ENCODE measurements at regions of chr11 and their contacts with region 1.

Region 1: DNA sequence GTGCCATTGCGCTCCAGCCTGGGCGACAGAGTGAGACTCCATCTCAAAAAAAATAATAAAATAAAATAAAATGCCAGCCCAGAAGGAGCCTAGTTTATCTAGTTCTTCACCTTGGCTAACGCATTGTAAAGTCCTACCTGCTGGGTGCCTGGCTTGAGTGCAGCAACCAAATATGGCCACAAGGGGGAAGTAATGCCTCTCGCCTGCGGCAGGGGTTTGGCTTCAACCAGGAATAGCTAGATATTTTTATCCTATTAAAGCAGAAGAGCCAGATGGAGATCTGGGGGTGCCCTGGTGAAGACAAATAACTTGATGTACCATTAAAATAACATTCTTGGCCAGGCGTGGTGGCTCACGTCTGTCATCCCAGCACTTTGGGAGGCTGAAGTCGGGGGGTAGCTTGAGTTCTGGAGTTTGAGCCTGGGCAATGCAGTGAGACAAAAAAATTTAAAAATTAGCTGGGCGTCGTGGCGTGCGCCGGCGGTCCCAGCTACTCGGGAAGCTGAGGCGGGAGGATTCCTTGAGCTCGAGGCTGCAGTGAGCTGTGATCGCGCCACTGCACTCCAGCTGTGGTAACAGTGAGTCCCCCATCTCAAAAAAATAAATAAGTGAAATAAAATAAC is 20.6 kb upstream of the PLEKHB1 start:
- DNase-seq: peak; percentile 76
- ATAC-seq: peak; percentile 87
- H3K4me3 Mint-ChIP-seq: no peak overlapping the region
- H3K27ac Mint-ChIP-seq: no peak overlapping the region
- H3K4me1 Mint-ChIP-seq: peaks cover 2% of the 10 kb centered on the region
- H3K27me3 Mint-ChIP-seq: peaks cover 25% of the 10 kb centered on the region

Region 2: GRCh38 chr11:73478738-73479347 is 147.0 kb before region 1 on chr11:
- CTCF ChIA-PET with region 1: interaction called, 11 read pairs
- POLR2A ChIA-PET with region 1: no interaction called
- DNase-seq: no peak
- ATAC-seq: no peak
- H3K4me3 Mint-ChIP-seq: no peak overlapping the region
- H3K27ac Mint-ChIP-seq: no peak overlapping the region
- H3K4me1 Mint-ChIP-seq: no peaks in the 10 kb centered on the region
- H3K27me3 Mint-ChIP-seq: peaks cover 2% of the 10 kb centered on the region

Region 3: DNA sequence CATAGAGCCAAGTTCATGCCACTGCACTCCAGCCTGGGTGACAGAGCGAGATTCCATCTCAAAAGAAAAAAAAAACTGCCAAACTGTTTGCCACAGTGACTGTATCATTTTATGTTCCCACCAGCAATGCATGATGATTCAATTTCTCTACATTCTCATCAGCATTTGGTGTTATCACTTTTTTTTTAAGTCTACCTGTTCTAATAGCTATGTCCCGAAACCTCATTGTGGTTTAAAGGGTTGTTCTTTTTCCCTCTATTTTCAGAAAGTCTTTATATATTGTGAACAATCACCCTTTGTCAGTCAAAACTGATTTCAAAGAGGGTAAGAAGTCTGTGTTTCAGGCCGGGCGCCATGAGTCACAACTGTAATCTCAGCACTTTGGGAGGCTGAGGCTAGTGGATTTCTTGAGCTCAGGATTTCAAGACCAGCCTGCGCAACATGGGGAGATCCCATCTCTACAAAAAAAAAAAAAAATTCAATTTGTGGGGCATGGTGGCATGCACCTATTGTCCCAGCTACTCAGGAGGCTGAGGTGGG is 13.1 kb before region 1 on chr11:
- CTCF ChIA-PET with region 1: interaction called, 11 read pairs
- POLR2A ChIA-PET with region 1: no interaction called
- DNase-seq: no peak
- ATAC-seq: no peak
- H3K4me3 Mint-ChIP-seq: no peak overlapping the region
- H3K27ac Mint-ChIP-seq: no peak overlapping the region
- H3K4me1 Mint-ChIP-seq: no peaks in the 10 kb centered on the region
- H3K27me3 Mint-ChIP-seq: peaks cover 5% of the 10 kb centered on the region

Region 4: DNA sequence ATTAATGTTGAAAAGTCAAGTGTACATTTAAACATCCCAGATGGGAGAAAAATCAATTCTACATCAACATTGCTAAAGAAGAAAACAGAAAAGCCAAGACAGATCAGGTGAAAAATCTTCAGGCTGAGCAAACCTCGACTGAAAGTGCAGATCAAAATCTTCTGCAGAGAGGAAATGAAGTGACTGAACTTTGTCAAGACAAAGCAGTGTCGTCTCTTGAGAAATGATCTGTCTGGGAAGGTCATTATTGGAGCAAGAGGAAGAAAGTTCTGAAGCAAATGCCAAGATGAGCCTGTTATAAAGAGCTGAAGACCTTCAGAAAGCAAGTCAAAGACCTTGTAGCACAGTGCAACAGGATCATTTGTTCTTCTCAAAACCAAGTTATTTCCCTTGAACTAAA is 14.8 kb after region 1 on chr11:
- CTCF ChIA-PET with region 1: interaction called, 32 read pairs
- POLR2A ChIA-PET with region 1: no interaction called
- DNase-seq: no peak
- ATAC-seq: no peak
- H3K4me3 Mint-ChIP-seq: no peak overlapping the region
- H3K27ac Mint-ChIP-seq: no peak overlapping the region
- H3K4me1 Mint-ChIP-seq: peaks cover 6% of the 10 kb centered on the region
- H3K27me3 Mint-ChIP-seq: no peaks in the 10 kb centered on the region

Region 5: GRCh38 chr11:73647459-73648100 is 21.8 kb after region 1 on chr11:
- CTCF ChIA-PET with region 1: interaction called, 27 read pairs
- POLR2A ChIA-PET with region 1: interaction called, 5 read pairs
- DNase-seq: peak; percentile 95
- ATAC-seq: peak; percentile 99
- H3K4me3 Mint-ChIP-seq: peak overlapping the region; percentile 76
- H3K27ac Mint-ChIP-seq: peak overlapping the region; percentile 78
- H3K4me1 Mint-ChIP-seq: peaks cover 17% of the 10 kb centered on the region
- H3K27me3 Mint-ChIP-seq: no peaks in the 10 kb centered on the region

Region 6: DNA sequence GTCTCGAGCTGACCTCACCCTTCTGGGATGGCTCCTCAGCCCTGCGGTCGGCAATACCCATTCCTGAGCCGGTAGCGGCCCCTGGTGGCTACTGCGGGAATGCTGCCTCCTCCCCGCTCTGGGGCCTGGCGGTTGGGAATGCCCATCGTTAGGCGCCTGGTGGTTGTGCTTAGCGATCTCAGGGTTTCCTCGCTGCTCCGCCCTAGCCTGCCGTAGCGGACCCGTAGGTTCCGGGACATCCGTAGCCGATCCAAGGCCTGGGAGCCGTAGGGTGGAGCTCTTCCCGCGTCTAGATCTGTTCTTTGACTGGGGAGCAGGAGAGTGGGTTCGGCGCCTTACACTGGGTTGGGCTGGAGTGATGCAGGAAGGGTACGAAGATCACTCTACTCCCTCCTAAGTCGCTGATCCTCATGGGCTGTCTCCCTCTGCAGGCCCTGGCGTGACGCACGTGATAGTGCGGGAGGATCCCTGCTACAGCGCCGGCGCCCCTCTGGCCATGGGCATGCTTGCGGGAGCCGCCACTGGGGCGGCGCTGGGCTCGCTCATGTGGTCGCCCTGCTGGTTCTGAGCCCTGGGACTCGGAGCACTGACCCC is 35.3 kb after region 1 on chr11:
- CTCF ChIA-PET with region 1: interaction called, 165 read pairs
- POLR2A ChIA-PET with region 1: interaction called, 4 read pairs
- DNase-seq: peak; percentile 82
- ATAC-seq: peak; percentile 91
- H3K4me3 Mint-ChIP-seq: peak overlapping the region; percentile 32
- H3K27ac Mint-ChIP-seq: no peak overlapping the region
- H3K4me1 Mint-ChIP-seq: peaks cover 3% of the 10 kb centered on the region
- H3K27me3 Mint-ChIP-seq: no peaks in the 10 kb centered on the region

Region 7: GRCh38 chr11:73931039-73931645 is 305.3 kb after region 1 on chr11:
- CTCF ChIA-PET with region 1: interaction called, 13 read pairs
- POLR2A ChIA-PET with region 1: no interaction called
- DNase-seq: peak; percentile 47
- ATAC-seq: peak; percentile 72
- H3K4me3 Mint-ChIP-seq: no peak overlapping the region
- H3K27ac Mint-ChIP-seq: no peak overlapping the region
- H3K4me1 Mint-ChIP-seq: no peaks in the 10 kb centered on the region
- H3K27me3 Mint-ChIP-seq: no peaks in the 10 kb centered on the region

Measured in activated CD8-positive, alpha-beta T cell treated with anti-CD3 and anti-CD28 coated beads, Interleukin-2, amount 10 ng/mL, durations not matched to agents 7 days and 5 days (primary cell).